ENCODE measurements at regions of chr1 and their contacts with region 1.

Region 1: DNA sequence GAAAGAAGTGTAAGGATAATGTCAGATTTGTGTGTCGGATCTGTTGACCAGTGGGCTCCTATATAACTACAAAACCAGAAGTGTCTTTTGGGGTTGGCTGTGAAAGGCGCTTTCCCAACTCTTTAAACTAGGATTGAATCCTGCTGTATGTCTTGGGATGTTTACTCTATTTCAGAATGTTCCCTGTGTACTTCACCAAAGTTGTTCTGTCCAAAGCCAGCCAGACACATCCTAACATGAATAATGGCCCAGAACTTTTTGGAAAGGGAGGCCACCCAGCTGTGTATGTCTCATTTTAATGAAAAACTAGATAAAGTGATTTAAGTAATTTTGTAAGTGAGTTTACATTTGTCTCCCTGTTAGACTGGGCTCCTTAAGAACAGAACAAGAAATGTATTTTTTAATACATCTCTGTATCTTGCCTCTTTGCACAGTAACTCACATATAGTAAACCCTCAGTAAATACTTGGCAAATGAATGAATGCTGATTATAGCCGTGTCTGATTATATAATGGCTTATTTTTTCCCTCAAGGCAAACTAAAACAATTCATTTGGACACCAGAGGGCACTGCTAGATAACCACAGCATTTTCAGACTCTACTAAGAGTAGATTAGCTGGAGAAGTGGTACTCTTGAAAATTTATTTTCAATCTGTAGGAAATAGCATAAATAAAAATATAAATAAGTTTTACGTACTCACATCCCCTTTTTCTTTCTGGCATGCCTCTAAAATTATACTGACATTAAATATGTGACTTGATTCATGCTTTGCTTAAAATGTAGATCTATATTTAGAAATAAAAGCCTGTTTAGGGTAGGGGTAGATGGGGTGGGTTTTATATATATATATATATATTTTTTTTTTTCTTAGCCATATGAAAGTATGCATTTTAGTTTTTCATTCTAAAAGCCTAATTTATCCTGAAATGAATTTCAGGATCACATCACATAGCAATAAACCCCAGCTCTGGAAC is 23.8 kb downstream of the TSEN15 start:
- DNase-seq: no peak
- ATAC-seq: peak; percentile 88 to 90

Region 2: GRCh38 chr1:184222652-184223052 is 147.3 kb after region 1 on chr1:
- intact Hi-C with region 1: loop called (anchors 2 to 5 kb)
- DNase-seq: peak; percentile 37
- ATAC-seq: peak; percentile 60

Region 3: GRCh38 chr1:184691719-184692324 is 616.5 kb after region 1 on chr1:
- intact Hi-C with region 1: loop called in 1 of 2 experiments (anchors 5 kb)
- DNase-seq: no peak
- ATAC-seq: peak in 1 of 2 donors; percentile 38

Measured in left cardiac atrium (tissue), 4 donors.